Ascending aorta (tissue), 2 donors: ENCODE measurements at regions of chrX and their contacts with region 1.

Region 1: DNA sequence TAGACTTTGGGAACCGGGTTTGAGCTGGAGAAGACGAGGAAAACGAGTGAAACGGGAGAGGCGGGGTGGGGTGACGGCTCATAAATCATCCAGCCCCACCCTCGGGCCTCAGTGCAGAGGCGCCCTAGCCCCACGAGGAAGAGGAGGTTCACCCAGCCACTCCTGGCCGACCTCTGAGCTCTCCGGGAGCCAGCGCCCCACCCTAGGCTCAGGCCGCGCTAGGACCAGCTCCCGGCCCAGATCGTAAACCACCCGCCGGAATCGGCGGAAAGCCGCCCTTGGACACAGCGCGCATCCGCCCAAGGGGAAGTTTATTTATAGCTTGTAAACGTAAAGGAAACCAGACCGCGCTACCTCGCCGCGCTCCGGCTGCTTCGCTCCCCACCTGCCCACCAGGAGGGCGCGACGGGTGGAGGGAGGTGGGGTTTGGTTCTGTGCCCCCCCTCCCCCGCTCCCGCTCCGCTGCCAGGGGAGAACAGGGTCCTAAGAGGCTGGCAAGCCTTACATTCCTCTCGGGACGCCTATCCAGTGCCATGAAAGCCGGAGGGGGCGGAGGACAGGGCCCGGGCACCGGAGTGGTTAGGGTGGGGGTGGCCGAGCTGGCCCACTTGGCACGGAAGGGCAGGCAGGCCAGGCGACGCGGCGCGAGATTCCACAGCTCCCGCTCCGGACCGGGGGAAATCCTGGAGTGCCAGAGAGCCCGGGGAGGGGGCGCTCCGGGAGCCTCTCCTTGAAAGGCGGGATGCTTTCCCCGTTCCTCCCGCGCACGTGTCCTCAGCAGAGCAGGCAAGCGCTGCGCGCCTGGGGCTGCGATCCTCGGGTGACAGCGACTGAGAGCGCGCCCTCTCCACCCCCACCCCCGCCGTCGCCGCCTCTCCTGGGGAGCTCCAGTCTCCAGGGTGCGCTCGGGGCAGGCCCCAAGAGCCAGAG is 84.2 kb downstream of the BCOR start:
- DNase-seq: peak in 1 of 2 donors; percentile 79
- H3K4me3 ChIP-seq: peak overlapping the region; percentile 55 to 67
- H3K27ac ChIP-seq: peak overlapping the region; percentile 92 to 97
- H3K4me1 ChIP-seq: peaks cover 0 to 9% of the 10 kb centered on the region in 2 donors
- H3K27me3 ChIP-seq: peaks cover 10% of the 10 kb centered on the region
- CTCF ChIP-seq: no peak

Region 2: GRCh38 chrX:38803586-38804431 is 1209.7 kb before region 1 on chrX:
- intact Hi-C with region 1: loop called (anchors 5 kb)
- DNase-seq: peak; percentile 49 to 90
- H3K4me3 ChIP-seq: peak overlapping the region; percentile 66 to 78
- H3K27ac ChIP-seq: peak overlapping the region; percentile 80 to 91
- H3K4me1 ChIP-seq: peaks cover 0 to 5% of the 10 kb centered on the region in 2 donors
- H3K27me3 ChIP-seq: no peaks in the 10 kb centered on the region
- CTCF ChIP-seq: no peak

Region 3: GRCh38 chrX:39730662-39731397 is 282.7 kb before region 1 on chrX:
- intact Hi-C with region 1: loop called (anchors 5 kb)
- DNase-seq: peak; percentile 50 to 90
- H3K4me3 ChIP-seq: no peak overlapping the region
- H3K27ac ChIP-seq: peak overlapping the region; percentile 45 to 69
- H3K4me1 ChIP-seq: peaks cover 5 to 12% of the 10 kb centered on the region in 2 donors
- H3K27me3 ChIP-seq: no peaks in the 10 kb centered on the region
- CTCF ChIP-seq: peak; percentile 27 to 68 (median 56)

Region 4: GRCh38 chrX:39907964-39908616 is 105.4 kb before region 1 on chrX:
- intact Hi-C with region 1: loop called (anchors 2 kb)
- DNase-seq: peak; percentile 38 to 90
- H3K4me3 ChIP-seq: peak overlapping the region in 1 of 2 donors; percentile 47
- H3K27ac ChIP-seq: peak overlapping the region; percentile 48 to 72
- H3K4me1 ChIP-seq: peaks cover 4 to 15% of the 10 kb centered on the region in 2 donors
- H3K27me3 ChIP-seq: no peaks in the 10 kb centered on the region
- CTCF ChIP-seq: no peak

Region 5: GRCh38 chrX:40175511-40176350 is 162.2 kb after region 1 on chrX:
- intact Hi-C with region 1: loop called (anchors 5 kb)
- DNase-seq: peak in 1 of 2 donors; percentile 86
- H3K4me3 ChIP-seq: peak overlapping the region; percentile 59 to 75
- H3K27ac ChIP-seq: peak overlapping the region; percentile 89 to 93
- H3K4me1 ChIP-seq: peaks cover 3 to 14% of the 10 kb centered on the region in 2 donors
- H3K27me3 ChIP-seq: no peaks in the 10 kb centered on the region
- CTCF ChIP-seq: no peak

Region 6: GRCh38 chrX:40617566-40617965 is 604.0 kb after region 1 on chrX:
- intact Hi-C with region 1: no loop called
- DNase-seq: no peak
- H3K4me3 ChIP-seq: no peak overlapping the region
- H3K27ac ChIP-seq: no peak overlapping the region
- H3K4me1 ChIP-seq: no peaks in the 10 kb centered on the region
- H3K27me3 ChIP-seq: no peaks in the 10 kb centered on the region
- CTCF ChIP-seq: no peak